WTC11 (cell line): ENCODE measurements at regions of chr15 and their contacts with region 1.

Region 1: GRCh38 chr15:29568838-29569532 is 253.3 kb downstream of the TJP1 start:
- DNase-seq: peak; percentile 53
- ATAC-seq: peak; percentile 65
- H3K4me3 Mint-ChIP-seq: peak overlapping the region; percentile 75
- H3K27ac Mint-ChIP-seq: no peak overlapping the region
- H3K4me1 Mint-ChIP-seq: peaks cover 34% of the 10 kb centered on the region
- H3K27me3 Mint-ChIP-seq: peaks cover 37% of the 10 kb centered on the region
- CTCF ChIP-seq: no peak

Region 2: GRCh38 chr15:29451201-29451781 is 117.7 kb before region 1 on chr15:
- CTCF ChIA-PET with region 1: interaction called, 37 read pairs
- POLR2A ChIA-PET with region 1: no interaction called
- DNase-seq: peak; percentile 58
- ATAC-seq: peak; percentile 87
- H3K4me3 Mint-ChIP-seq: no peak overlapping the region
- H3K27ac Mint-ChIP-seq: no peak overlapping the region
- H3K4me1 Mint-ChIP-seq: peaks cover 32% of the 10 kb centered on the region
- H3K27me3 Mint-ChIP-seq: no peaks in the 10 kb centered on the region
- CTCF ChIP-seq: no peak

Region 3: GRCh38 chr15:29556380-29556779 is 12.6 kb before region 1 on chr15:
- CTCF ChIA-PET with region 1: interaction called, 11 read pairs
- POLR2A ChIA-PET with region 1: no interaction called
- DNase-seq: no peak
- ATAC-seq: no peak
- H3K4me3 Mint-ChIP-seq: no peak overlapping the region
- H3K27ac Mint-ChIP-seq: no peak overlapping the region
- H3K4me1 Mint-ChIP-seq: peaks cover 12% of the 10 kb centered on the region
- H3K27me3 Mint-ChIP-seq: no peaks in the 10 kb centered on the region
- CTCF ChIP-seq: no peak

Region 4: GRCh38 chr15:29636140-29636539 is 67.2 kb after region 1 on chr15:
- CTCF ChIA-PET with region 1: no interaction called
- POLR2A ChIA-PET with region 1: no interaction called
- DNase-seq: no peak
- ATAC-seq: no peak
- H3K4me3 Mint-ChIP-seq: no peak overlapping the region
- H3K27ac Mint-ChIP-seq: no peak overlapping the region
- H3K4me1 Mint-ChIP-seq: peaks cover 13% of the 10 kb centered on the region
- H3K27me3 Mint-ChIP-seq: peaks cover 2% of the 10 kb centered on the region; the same call in 1 of the 2 replicates
- CTCF ChIP-seq: no peak

Region 5: DNA sequence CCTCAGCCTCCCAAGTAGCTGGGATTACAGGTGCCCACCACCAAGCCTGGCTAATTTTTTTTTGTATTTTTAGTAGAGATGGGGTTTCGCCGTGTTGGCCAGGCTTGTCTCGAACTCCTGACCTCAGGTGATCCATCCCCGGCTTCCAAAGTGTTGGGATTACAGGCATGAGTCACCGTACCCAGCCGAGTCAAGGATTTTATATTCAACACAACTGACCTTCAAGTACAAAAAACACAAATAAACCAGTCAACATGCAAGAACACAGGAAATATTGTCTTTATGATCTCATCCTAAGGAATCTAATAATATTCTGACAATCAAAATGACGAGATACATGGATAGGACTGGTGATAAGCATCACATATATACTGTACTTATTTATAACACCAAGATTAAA is 215.4 kb after region 1 on chr15:
- CTCF ChIA-PET with region 1: no interaction called
- POLR2A ChIA-PET with region 1: no interaction called
- DNase-seq: no peak
- ATAC-seq: no peak
- H3K4me3 Mint-ChIP-seq: no peak overlapping the region
- H3K27ac Mint-ChIP-seq: no peak overlapping the region
- H3K4me1 Mint-ChIP-seq: peaks cover 32% of the 10 kb centered on the region
- H3K27me3 Mint-ChIP-seq: no peaks in the 10 kb centered on the region
- CTCF ChIP-seq: no peak